ENCODE measurements at regions of chr3 and their contacts with region 1.

Region 1: DNA sequence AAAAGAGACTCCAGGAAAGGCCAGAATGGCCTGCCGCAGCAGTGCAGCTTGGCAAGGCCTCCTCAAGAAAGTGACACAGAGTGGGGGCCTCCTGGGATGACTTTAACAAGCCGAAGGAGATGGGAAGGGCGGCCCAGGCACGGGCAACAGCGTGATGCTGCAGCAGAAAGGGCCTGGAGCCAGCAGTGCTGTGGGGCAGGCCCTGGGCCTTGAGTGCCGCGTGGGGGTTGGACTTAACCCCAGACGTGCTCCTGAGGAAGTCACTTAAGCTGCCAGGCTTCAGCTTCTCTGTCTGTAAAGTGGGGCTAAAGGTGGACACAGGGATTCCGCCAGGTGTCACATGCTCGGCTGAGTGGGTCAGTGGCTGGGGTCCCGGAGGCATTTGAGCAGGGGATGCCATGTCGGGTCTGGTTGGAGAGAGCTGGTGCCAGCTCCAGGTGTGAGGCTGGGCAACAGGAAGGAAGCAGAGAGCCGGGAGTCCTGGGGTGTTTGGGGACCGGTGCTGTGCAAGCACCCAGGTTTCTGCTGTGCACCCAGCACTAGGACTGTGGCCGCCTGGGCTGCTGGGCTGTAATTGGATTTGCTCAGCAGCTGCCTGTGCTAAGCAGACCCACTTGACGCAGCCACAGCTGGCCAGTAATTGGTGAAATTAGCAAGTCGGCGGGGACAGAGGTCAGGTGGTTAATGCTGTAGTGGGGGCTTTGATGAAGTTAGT is 7.8 kb downstream of the DNAJB8 start:
- DNase-seq: no peak
- H3K4me3 ChIP-seq: no peak overlapping the region
- H3K27me3 ChIP-seq: peaks cover 25% of the 10 kb centered on the region
- CTCF ChIP-seq: no peak

Region 2: GRCh38 chr3:128153156-128154041 is 305.5 kb before region 1 on chr3 and contains the start of gene EEFSEC:
- CTCF ChIA-PET with region 1: no interaction called
- POLR2A ChIA-PET with region 1: no interaction called
- DNase-seq: peak; percentile 29
- H3K4me3 ChIP-seq: peak within 1 kb of the TSS; percentile 93
- H3K27me3 ChIP-seq: no peaks in the 10 kb centered on the region
- CTCF ChIP-seq: no peak
- polyA plus RNA-seq, gene EEFSEC: 10.9 and 16.3 TPM in 2 replicates

Region 3: DNA sequence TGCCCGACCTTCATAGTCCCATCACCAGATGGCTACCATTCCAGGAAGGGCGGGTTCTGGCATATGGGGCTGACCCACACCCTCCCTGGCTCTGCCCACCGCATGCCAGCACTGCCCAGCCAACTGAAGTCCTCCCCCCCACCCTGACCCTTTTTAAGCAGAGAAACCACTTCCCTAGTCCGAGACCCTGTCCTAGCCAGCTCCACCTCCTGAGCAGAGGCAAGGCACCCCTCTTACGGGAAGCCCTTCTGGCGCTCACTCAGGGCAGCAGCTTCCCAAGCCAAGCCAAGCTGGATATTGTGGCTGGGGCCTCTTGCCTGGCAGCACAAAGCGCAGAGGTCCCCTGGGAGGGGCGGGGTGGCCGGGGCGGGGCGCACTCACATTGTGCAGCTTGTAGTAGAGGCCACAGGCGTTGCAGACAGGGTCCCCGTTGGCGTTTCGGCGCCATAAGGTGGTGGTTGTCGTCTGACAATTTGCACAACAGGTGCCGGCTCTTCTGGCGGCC is 22.6 kb after region 1 on chr3:
- CTCF ChIA-PET with region 1: interaction called, 4 read pairs
- POLR2A ChIA-PET with region 1: interaction called, 19 read pairs
- DNase-seq: no peak
- H3K4me3 ChIP-seq: no peak overlapping the region
- H3K27me3 ChIP-seq: no peaks in the 10 kb centered on the region
- CTCF ChIP-seq: no peak

Measured in BJ (cell line).